Gastrocnemius medialis (tissue), 4 donors: ENCODE measurements at regions of chr4 and their contacts with region 1.

Region 1: DNA sequence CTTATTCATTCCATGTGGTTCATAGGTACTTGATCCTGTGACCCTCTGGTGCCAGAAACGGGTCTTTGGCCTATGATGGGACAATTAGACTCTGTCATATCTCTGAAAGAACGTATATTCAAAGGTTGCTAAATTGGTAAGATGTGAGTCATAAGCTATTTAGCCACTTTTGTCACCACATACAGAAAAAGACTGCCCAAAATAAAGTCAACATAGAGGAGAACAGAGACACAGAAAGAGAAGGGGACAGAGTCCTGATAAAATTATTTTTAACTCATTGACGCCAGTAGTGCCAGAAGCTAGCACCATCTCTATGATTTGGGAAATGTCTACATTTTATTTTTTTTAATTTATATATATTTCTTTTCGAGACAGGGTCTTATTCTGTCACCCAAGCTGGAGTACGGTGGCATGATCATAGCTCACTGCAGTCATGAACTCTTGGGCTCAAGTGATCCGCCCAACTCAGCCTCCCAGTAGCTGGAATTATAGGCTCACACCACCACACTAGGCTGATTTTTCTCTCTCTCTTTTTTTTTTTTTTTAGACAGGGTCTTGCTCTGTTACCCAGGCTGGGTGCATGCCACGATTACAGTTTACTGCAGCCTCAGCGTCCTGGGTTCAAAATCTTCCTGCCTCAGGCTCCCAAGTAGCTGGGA is 92.1 kb upstream of the COX18 start:
- DNase-seq: no peak
- ATAC-seq: no peak
- H3K4me3 ChIP-seq: no peak overlapping the region
- H3K27ac ChIP-seq: no peak overlapping the region
- H3K4me1 ChIP-seq: no peaks in the 10 kb centered on the region
- H3K27me3 ChIP-seq: no peaks in the 10 kb centered on the region
- CTCF ChIP-seq: no peak
- POLR2A ChIP-seq: no peak

Region 2: GRCh38 chr4:73142995-73143547 is 18.6 kb before region 1 on chr4:
- in situ Hi-C with region 1: no loop called
- intact Hi-C with region 1: loop called (anchors 1 kb)
- DNase-seq: no peak
- ATAC-seq: no peak
- H3K4me3 ChIP-seq: no peak overlapping the region
- H3K27ac ChIP-seq: no peak overlapping the region
- H3K4me1 ChIP-seq: peaks cover 0 to 6% of the 10 kb centered on the region in 2 donors
- H3K27me3 ChIP-seq: no peaks in the 10 kb centered on the region
- CTCF ChIP-seq: no peak
- POLR2A ChIP-seq: no peak

Region 3: DNA sequence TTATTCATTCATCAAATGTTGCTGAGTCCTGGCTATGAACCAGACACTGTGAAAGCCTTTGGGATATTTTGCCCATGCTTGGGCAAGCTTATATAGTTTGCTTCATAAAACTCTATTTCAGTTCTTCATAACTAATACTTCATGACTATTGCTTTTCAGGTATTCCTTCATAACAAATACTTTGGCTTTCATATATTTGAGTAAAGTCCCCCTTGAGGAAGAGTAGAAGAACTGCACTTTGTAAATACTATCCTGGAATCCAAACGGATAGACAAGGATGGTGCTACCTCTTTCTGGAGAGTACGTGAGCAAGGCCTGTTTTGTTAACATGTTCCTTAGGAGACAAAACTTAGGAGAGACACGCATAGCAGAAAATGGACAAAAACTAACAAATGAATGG is 272.7 kb after region 1 on chr4:
- in situ Hi-C with region 1: no loop called
- intact Hi-C with region 1: no loop called
- DNase-seq: no peak
- ATAC-seq: no peak
- H3K4me3 ChIP-seq: no peak overlapping the region
- H3K27ac ChIP-seq: no peak overlapping the region
- H3K4me1 ChIP-seq: no peaks in the 10 kb centered on the region
- H3K27me3 ChIP-seq: no peaks in the 10 kb centered on the region
- CTCF ChIP-seq: no peak
- POLR2A ChIP-seq: no peak